ENCODE measurements at regions of chr2 and their contacts with region 1.

Region 1: GRCh38 chr2:187574969-187575750 is 20.9 kb upstream of the TFPI start:
- DNase-seq: no peak
- H3K4me3 Mint-ChIP-seq: no peak overlapping the region
- H3K27ac Mint-ChIP-seq: peak overlapping the region; percentile 74
- H3K4me1 Mint-ChIP-seq: peaks cover 22% of the 10 kb centered on the region
- H3K27me3 Mint-ChIP-seq: no peaks in the 10 kb centered on the region
- CTCF ChIP-seq: no peak

Region 2: GRCh38 chr2:187541086-187542085 is 33.8 kb before region 1 on chr2:
- CTCF ChIA-PET with region 1: no interaction called
- intact Hi-C with region 1: loop called (anchors 5 kb)
- DNase-seq: peak; percentile 31
- H3K4me3 Mint-ChIP-seq: peak overlapping the region; percentile 55
- H3K27ac Mint-ChIP-seq: peak overlapping the region; percentile 88
- H3K4me1 Mint-ChIP-seq: peaks cover 48% of the 10 kb centered on the region
- H3K27me3 Mint-ChIP-seq: no peaks in the 10 kb centered on the region
- CTCF ChIP-seq: no peak

Measured in Calu3 (cell line).